ENCODE measurements at regions of chr1 and their contacts with region 1.

Region 1: DNA sequence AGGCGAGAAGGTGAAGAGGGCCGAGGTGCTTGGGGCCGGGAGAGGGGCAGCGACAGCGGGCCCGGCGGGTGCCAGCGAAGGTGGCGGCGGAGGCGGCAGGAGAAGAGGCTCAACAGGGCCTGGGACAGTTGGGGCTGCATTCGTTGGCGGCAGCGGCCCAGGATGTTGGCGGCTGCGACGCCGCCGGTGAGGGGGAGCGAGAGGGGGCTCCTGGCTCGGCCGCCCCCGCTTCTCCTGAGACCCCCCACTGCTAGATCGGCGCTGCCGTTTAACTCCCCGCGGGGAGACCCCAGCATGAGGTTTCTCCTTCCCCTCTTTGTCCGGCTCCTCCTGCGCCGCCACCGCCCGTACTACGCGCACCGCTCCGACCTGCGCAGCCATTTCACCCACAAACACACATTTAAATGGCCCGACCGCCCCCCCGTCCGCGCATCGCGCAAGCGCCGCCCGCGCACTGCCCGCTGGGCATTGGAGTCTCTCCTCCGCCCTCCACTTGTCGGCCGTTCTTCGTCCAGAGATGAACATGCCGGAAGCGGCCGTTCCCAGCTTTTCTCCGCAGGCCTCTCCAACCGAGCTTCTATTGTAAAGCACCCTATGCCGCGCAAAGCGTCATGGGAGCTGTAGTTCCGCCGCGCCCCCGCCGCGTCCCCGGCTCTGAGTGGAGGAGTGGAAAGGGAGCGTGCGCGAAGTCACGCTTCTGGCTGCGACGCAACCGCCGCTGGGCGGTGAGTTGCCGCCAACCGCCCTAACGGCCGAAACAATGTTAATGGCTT is at the start of gene RSBN1:
- DNase-seq: peak; percentile 96 to 99 (median 98)
- ATAC-seq: peak; percentile 91
- H3K4me3 ChIP-seq: peak within 1 kb of the TSS; percentile 89 to 98
- H3K4me3 Mint-ChIP-seq: peak within 1 kb of the TSS; percentile 93
- H3K27ac ChIP-seq: peak within 1 kb of the TSS; percentile 90 to 94
- H3K27ac Mint-ChIP-seq: peak within 1 kb of the TSS; percentile 98
- H3K4me1 ChIP-seq: peaks cover 24% of the 10 kb centered on the region
- H3K4me1 Mint-ChIP-seq: peaks cover 37% of the 10 kb centered on the region
- H3K27me3 ChIP-seq: no peaks in the 10 kb centered on the region
- H3K27me3 Mint-ChIP-seq: no peaks in the 10 kb centered on the region
- CTCF ChIP-seq: no peak
- total RNA-seq, gene RSBN1: 36.8 to 37.6 TPM

Region 2: DNA sequence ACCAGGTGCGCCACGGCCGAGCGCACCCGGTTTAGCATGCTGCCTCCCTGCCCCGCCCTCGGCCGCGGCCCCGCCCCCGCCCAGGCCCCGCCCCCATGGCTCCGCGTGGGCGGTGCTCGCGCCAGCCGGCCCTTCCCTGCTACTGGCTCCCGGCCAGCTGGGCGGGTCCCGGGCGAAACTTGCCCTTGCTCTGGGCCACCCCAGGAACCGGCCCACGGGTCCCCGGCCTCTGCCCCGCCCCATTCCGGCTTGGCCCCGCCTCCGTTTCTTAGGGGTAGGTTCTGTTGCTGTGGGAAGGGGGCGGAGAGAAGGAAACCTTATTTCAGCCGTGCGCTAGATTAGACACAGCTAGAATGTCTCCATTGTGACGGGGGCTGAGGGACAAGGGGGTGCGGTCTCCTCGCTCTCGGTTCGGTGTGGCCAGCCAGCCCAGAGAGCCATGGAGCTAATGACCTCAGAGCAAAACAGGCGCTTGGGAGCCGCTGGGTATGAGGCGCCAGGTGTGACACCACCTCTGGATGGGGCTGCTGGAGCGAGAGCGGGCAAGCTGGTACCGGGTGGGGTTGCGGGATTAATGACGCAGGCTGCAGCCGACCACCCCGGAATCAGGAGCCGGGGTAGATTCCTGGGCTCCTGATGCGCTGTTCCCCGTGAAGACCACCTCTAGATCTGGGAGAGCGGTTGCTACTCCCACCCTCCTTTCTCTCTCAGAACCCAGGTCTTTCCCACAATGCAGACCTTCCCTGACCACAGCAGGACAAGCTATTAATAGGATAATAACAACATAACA is 1096.6 kb before region 1 on chr1 and contains the start of gene PPM1J:
- CTCF ChIA-PET with region 1: no interaction called
- POLR2A ChIA-PET with region 1: no interaction called
- intact Hi-C with region 1: loop called in 1 of 2 experiments (anchors 5 kb)
- DNase-seq: peak; percentile 90 to 97 (median 95)
- ATAC-seq: peak; percentile 82
- H3K4me3 ChIP-seq: peak within 1 kb of the TSS; percentile 52 to 67
- H3K4me3 Mint-ChIP-seq: peak within 1 kb of the TSS; percentile 90
- H3K27ac ChIP-seq: peak within 1 kb of the TSS; percentile 10 to 42
- H3K27ac Mint-ChIP-seq: peak within 1 kb of the TSS; percentile 88
- H3K4me1 ChIP-seq: peaks cover 25% of the 10 kb centered on the region
- H3K4me1 Mint-ChIP-seq: peaks cover 21% of the 10 kb centered on the region
- H3K27me3 ChIP-seq: peaks cover 0 to 10% of the 10 kb centered on the region in 2 experiments
- H3K27me3 Mint-ChIP-seq: peaks cover 12% of the 10 kb centered on the region
- CTCF ChIP-seq: no peak
- total RNA-seq, gene PPM1J: 0.57 to 0.69 TPM

Region 3: DNA sequence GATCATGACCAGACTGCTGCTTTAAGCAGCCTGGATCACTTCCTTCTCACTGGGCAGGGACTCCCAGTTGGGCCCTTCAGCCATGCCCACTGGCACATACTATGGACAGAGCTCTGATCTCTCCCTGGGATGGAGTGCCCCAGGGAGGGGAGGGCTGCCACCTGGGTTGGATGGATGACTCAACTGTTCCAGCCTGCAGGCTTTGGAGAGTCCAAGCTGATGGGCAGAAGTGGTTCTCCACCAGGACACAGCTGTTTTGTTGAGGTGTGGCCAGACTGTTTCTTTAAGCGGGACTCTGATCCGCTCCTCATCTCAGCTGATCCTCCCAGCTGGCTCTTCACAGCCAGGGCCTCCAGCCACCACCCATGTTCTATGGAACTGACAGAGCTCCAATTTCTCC is 254.9 kb before region 1 on chr1:
- CTCF ChIA-PET with region 1: no interaction called
- POLR2A ChIA-PET with region 1: no interaction called
- intact Hi-C with region 1: no loop called
- DNase-seq: no peak
- ATAC-seq: no peak
- H3K4me3 ChIP-seq: no peak overlapping the region
- H3K4me3 Mint-ChIP-seq: no peak overlapping the region
- H3K27ac ChIP-seq: no peak overlapping the region
- H3K27ac Mint-ChIP-seq: no peak overlapping the region
- H3K4me1 ChIP-seq: no peaks in the 10 kb centered on the region
- H3K4me1 Mint-ChIP-seq: no peaks in the 10 kb centered on the region
- H3K27me3 ChIP-seq: no peaks in the 10 kb centered on the region
- H3K27me3 Mint-ChIP-seq: peaks cover 3% of the 10 kb centered on the region
- CTCF ChIP-seq: no peak

Region 4: DNA sequence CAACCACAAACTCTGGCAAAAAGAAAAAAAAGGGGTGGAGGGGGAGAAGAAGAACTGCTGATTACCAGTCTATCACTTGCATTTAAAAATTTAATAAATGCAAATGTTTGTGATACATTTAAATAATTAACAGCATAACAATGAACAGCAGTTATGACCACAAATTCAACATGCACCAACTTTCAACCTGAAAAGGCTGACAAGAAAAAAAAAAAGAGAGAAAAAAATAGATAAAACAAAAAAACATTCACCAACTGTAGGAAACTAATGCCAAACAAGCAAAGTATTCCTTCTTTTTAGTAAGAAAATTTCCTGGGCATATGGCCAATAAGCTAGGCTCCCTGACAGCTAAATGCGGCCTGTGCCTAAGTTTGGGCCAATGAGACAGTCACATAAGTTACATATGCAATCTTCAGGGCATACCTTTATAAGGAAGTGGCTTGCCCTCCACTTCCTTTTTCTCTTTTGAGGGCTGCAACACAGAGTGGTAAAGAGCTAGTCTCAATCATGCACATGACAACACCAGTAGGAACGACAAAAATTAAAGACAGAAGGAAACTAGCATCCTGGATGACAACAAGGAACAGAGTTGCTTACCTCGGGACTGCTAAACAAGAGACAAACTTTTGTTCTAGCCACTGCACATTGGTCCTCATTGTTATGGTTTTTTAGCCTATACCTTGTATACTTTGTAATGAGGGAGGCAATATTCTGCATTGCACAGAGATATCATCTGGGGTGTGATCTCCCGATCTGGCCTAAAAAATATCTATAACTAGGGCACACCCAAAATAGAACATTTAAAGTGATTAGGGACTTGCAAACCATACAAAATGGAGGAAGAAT is 28.6 kb before region 1 on chr1:
- CTCF ChIA-PET with region 1: interaction called, 3 read pairs
- POLR2A ChIA-PET with region 1: interaction called, 17 read pairs
- intact Hi-C with region 1: loop called (anchors 1 to 2 kb)
- DNase-seq: peak; percentile 10 to 85 (median 44)
- ATAC-seq: peak; percentile 94
- H3K4me3 ChIP-seq: peak overlapping the region; percentile 13 to 20
- H3K4me3 Mint-ChIP-seq: peak overlapping the region; percentile 61
- H3K27ac ChIP-seq: peak overlapping the region; percentile 38 to 74
- H3K27ac Mint-ChIP-seq: peak overlapping the region; percentile 86
- H3K4me1 ChIP-seq: peaks cover 68% of the 10 kb centered on the region
- H3K4me1 Mint-ChIP-seq: peaks cover 37% of the 10 kb centered on the region
- H3K27me3 ChIP-seq: no peaks in the 10 kb centered on the region
- H3K27me3 Mint-ChIP-seq: no peaks in the 10 kb centered on the region
- CTCF ChIP-seq: no peak

Region 5: GRCh38 chr1:113871597-113872113 is 59.6 kb after region 1 on chr1 and contains the start of gene PTPN22:
- CTCF ChIA-PET with region 1: no interaction called
- POLR2A ChIA-PET with region 1: interaction called, 3 read pairs
- intact Hi-C with region 1: loop called in 1 of 2 experiments (anchors 1 kb)
- DNase-seq: peak; percentile 64 to 96 (median 80)
- ATAC-seq: peak; percentile 84
- H3K4me3 ChIP-seq: peak within 1 kb of the TSS; percentile 53 to 66
- H3K4me3 Mint-ChIP-seq: peak within 1 kb of the TSS; percentile 83
- H3K27ac ChIP-seq: peak within 1 kb of the TSS; percentile 79 to 82
- H3K27ac Mint-ChIP-seq: peak within 1 kb of the TSS; percentile 98
- H3K4me1 ChIP-seq: peaks cover 65% of the 10 kb centered on the region
- H3K4me1 Mint-ChIP-seq: peaks cover 81% of the 10 kb centered on the region
- H3K27me3 ChIP-seq: no peaks in the 10 kb centered on the region
- H3K27me3 Mint-ChIP-seq: no peaks in the 10 kb centered on the region
- CTCF ChIP-seq: no peak
- total RNA-seq, gene PTPN22: 48.6 to 52.4 TPM

Region 6: DNA sequence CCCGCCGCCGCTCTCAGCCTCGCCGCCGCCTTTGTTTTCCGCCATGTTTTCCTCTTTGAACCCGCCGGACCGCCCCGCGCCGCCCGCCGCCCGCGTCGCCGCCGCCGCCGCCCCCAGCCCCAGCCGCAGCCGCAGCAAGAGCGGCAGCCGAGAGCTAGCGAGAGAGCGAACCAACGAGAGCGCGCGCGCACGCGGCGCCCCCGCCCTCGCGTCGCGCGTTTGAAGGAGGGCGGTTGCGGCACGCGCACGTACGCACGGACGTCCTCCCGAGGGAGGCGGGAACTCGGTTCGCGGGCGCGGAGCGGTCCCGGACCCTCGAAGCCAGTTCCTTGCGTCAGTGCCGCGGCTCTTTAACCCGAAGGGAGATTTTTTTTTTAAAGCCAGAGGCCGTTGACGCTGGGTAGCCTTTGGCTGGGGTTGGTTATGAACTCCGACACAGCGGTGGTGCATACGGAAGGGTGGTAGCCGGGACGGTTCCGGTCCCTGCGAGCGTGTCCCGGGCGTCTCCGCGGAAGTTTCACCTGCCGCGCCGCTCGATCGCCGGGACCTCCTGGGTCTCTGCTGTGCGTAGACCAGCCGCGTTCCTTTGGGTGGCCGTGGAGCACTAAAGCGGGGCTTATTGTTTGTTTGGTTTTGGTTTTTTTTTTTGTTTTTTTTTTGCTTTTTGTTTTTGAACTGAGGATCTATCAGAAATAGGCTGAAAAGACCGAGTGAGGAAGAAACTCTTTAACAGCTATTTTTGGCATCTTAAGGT is 699.1 kb after region 1 on chr1 and contains the start of gene TRIM33:
- CTCF ChIA-PET with region 1: no interaction called
- POLR2A ChIA-PET with region 1: interaction called, 4 read pairs
- intact Hi-C with region 1: loop called (anchors 1 to 5 kb)
- DNase-seq: peak; percentile 84 to 98 (median 91)
- ATAC-seq: peak; percentile 80
- H3K4me3 ChIP-seq: peak within 1 kb of the TSS; percentile 78 to 96
- H3K4me3 Mint-ChIP-seq: peak within 1 kb of the TSS; percentile 96
- H3K27ac ChIP-seq: peak within 1 kb of the TSS; percentile 93 to 100
- H3K27ac Mint-ChIP-seq: peak within 1 kb of the TSS; percentile 99
- H3K4me1 ChIP-seq: peaks cover 40% of the 10 kb centered on the region
- H3K4me1 Mint-ChIP-seq: peaks cover 54% of the 10 kb centered on the region
- H3K27me3 ChIP-seq: no peaks in the 10 kb centered on the region
- H3K27me3 Mint-ChIP-seq: no peaks in the 10 kb centered on the region
- CTCF ChIP-seq: no peak
- total RNA-seq, gene TRIM33: 50.4 to 50.7 TPM

Region 7: DNA sequence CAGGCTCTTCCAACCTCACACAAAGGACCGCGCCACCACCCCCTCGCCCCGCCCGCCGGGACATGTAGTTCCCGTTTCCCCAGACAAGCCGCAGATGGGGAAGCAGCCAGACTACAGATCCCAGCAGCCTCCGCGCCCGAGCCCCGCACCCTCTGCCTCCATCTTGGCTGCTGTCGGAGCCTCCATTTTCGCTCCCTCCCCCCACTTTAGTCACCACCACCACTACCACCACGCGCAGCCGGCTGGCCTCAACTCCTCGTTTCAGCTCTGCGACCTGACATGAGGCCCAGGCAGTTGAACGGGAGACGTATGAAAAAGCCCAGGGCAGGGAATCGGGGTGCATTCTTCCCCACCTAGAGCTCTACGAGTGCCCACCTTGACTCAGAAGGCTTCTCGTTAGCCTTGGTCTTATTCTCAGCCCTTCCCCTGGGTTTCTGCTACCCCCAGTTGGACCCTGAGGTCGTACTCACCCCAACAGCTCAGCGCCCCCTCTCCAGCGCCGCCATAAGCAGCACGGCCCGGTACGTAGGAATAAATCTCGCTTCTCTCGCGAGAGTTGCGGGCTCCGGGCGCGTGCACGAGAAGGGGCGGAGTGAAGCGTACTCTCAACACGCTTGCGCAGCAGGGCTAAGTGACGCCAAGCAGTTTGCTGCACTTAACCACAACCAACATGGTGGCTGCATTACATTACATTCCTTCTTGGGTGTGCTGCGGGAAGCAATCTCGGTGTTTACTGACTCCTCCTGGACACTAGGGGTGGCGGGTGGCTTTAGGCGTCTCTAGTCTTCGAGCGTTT is 945.6 kb after region 1 on chr1 and contains the start of gene CSDE1:
- CTCF ChIA-PET with region 1: no interaction called
- POLR2A ChIA-PET with region 1: no interaction called
- intact Hi-C with region 1: loop called (anchors 2 to 10 kb)
- DNase-seq: peak; percentile 94 to 99 (median 97)
- ATAC-seq: peak; percentile 79
- H3K4me3 ChIP-seq: peak within 1 kb of the TSS; percentile 95 to 100
- H3K4me3 Mint-ChIP-seq: peak within 1 kb of the TSS; percentile 100
- H3K27ac ChIP-seq: peak within 1 kb of the TSS; percentile 97 to 100
- H3K27ac Mint-ChIP-seq: peak within 1 kb of the TSS; percentile 100
- H3K4me1 ChIP-seq: peaks cover 44% of the 10 kb centered on the region
- H3K4me1 Mint-ChIP-seq: peaks cover 51% of the 10 kb centered on the region
- H3K27me3 ChIP-seq: no peaks in the 10 kb centered on the region
- H3K27me3 Mint-ChIP-seq: no peaks in the 10 kb centered on the region
- CTCF ChIP-seq: no peak
- total RNA-seq, gene CSDE1: 732 to 774 TPM